Stomach (tissue), 19 donors: ENCODE measurements at regions of chr13 and their contacts with region 1.

Region 1: DNA sequence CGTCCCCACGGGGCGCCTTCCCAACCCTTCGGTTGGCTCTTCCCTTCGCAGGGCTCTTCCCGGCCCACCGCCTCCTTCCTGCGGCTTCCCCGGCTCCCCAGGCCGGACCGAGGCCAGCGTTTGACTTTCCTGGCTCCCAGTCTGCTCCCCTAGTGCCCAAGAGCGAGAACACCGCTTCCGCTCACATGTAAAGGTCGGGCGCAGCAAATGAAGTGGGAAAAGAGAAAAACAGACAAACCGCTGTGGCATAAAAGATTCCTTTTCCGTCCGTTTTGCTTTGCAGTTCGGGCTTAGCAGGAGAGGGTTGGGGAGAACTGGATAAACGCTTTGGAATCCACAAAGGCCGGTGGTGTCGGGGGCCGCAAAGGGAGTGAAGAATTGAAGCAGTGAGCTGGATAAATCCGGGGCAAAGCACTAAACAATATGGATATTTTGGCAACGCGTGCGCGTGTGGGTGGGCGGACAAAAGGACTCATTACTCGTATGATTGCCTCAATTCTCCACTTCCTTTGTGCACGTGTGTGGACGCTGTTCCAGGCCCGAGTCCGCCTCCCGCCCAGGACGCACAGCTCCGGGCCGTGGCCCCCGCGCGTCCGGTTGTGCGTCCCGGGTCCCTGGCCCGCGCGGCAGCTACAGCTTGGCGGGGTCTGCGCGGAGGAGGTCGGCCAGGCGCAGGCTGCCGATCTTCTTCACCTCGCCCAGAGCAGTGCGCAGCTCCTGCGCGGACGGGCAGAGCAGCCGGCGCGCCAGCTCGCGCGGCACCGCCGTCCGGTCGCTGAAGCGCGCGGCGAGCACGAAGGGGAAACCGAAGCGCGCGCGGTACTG is 8.6 kb upstream of the CDX2 start:
- DNase-seq: no peak
- H3K4me3 ChIP-seq: peak overlapping the region in 3 of 4 donors; percentile 13 to 24 (median 19)
- H3K27ac ChIP-seq: no peak overlapping the region
- H3K4me1 ChIP-seq: peaks cover 19 to 57% (median 43%) of the 10 kb centered on the region in 4 donors
- H3K27me3 ChIP-seq: peaks cover 47 to 100% (median 96%) of the 10 kb centered on the region in 3 donors
- CTCF ChIP-seq: no peak
- EP300 ChIP-seq: no peak
- POLR2A ChIP-seq: no peak

Region 2: GRCh38 chr13:26946684-26947343 is 1030.9 kb before region 1 on chr13:
- intact Hi-C with region 1: loop called (anchors 10 kb)
- DNase-seq: peak in 1 of 2 donors; percentile 83
- H3K4me3 ChIP-seq: no peak overlapping the region
- H3K27ac ChIP-seq: no peak overlapping the region
- H3K4me1 ChIP-seq: peaks cover 3 to 25% (median 19%) of the 10 kb centered on the region in 4 donors
- H3K27me3 ChIP-seq: no peaks in the 10 kb centered on the region
- CTCF ChIP-seq: peak in 5 of 7 experiments; percentile 60 to 95 (median 69)
- EP300 ChIP-seq: no peak
- POLR2A ChIP-seq: no peak

Region 3: DNA sequence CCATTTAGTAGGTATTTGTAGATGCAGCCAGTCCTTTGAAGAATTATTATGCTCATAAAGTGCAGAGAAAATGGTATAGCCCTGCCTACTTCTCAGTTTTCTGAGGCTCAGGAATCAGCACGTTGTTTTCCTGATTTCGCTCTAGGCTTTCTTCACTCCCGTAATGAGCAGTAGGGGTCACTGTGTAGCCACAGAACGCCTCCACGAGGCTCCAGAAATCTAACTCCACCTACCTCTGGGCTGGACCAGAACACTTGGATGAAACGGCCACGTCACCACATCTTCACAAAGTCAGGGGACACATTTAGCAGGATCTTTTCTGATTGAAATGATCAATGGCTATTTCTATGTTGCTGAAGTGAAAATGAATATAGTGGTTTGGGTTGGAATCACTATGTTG is 603.0 kb before region 1 on chr13:
- intact Hi-C with region 1: loop called (anchors 10 kb)
- DNase-seq: peak; percentile 73 to 93
- H3K4me3 ChIP-seq: no peak overlapping the region
- H3K27ac ChIP-seq: peak overlapping the region in 1 of 5 donors; percentile 2
- H3K4me1 ChIP-seq: peaks cover 5 to 38% (median 21%) of the 10 kb centered on the region in 4 donors
- H3K27me3 ChIP-seq: peaks cover 0 to 9% (median 0%) of the 10 kb centered on the region in 3 donors
- CTCF ChIP-seq: peak in 5 of 7 experiments; percentile 45 to 83 (median 57)
- EP300 ChIP-seq: no peak
- POLR2A ChIP-seq: no peak

Region 4: GRCh38 chr13:27523346-27524073 is 454.2 kb before region 1 on chr13:
- intact Hi-C with region 1: loop called (anchors 10 kb)
- DNase-seq: peak in 1 of 2 donors; percentile 14
- H3K4me3 ChIP-seq: no peak overlapping the region
- H3K27ac ChIP-seq: no peak overlapping the region
- H3K4me1 ChIP-seq: no peaks in the 10 kb centered on the region
- H3K27me3 ChIP-seq: peaks cover 0 to 11% (median 0%) of the 10 kb centered on the region in 3 donors
- CTCF ChIP-seq: no peak
- EP300 ChIP-seq: no peak
- POLR2A ChIP-seq: no peak

Region 5: DNA sequence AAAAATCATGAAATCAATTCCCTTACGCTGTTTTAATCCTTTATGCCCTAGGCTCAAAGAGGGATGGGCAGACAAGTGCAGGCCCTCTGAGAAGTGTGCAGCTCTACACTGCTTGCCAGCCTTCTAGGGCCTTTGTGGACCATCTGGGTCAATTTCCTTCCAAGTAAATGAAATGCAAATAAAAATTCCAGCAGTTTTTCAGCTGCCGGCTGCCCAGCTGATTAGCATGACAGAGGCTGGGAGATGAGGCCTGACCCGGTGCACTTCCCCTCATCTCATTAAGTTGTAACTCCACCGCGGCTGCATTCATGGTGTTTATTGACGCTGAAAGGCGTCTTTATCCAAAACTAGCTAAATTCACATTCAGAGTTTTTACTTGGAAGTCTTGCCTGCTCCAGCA is 232.9 kb before region 1 on chr13:
- intact Hi-C with region 1: no loop called
- DNase-seq: no peak
- H3K4me3 ChIP-seq: no peak overlapping the region
- H3K27ac ChIP-seq: no peak overlapping the region
- H3K4me1 ChIP-seq: no peaks in the 10 kb centered on the region
- H3K27me3 ChIP-seq: peaks cover 0 to 8% (median 0%) of the 10 kb centered on the region in 3 donors
- CTCF ChIP-seq: no peak
- EP300 ChIP-seq: no peak
- POLR2A ChIP-seq: no peak

Region 6: DNA sequence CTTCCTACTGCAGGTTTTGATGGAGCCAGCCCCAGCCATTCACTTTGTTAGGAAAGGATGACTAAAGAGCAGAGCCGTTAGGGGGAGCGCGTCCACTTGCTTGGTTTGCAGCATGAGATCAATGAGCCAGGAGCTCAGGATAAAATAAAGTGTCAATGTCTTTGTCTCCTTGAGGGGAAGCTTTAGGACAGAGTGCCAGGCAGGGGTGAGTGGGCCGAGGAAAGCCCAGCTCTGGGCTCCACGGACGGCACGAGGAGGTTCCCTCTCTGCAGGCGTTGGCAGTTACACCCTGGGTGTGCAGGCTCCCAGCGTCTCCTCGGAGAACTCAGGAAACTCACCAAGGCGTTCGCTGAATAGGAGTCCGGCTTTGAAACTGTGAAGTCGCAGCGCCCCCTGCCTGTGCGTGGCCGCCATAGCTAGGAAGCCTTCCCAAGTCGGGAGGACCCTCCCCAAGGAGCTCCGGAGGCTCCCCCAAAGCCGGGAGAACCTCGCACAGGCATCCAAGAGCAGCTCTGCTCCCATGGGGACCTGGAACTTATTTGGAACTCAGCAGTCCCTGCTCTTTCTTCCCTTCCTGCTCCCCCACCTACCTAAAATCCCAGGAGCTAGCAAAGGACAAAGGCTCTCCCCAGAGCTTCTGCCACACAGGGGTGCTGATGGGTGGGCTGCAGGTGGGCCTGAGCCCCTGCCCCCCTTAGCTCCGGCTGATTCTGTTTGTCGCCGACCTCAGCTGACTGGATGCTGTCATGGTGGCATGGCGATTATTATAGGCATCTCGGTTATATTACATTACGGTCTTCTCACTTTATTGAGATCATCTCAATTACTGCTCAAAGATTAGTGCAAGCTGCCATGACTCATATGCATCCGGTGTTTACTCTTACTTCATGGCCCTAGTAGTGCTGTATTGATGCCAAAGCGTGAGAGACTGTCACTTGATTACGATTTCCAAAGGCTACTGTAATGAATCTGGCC is 151.0 kb before region 1 on chr13:
- intact Hi-C with region 1: loop called (anchors 10 kb)
- DNase-seq: peak; percentile 86 to 95
- H3K4me3 ChIP-seq: peak overlapping the region; percentile 19 to 36 (median 25)
- H3K27ac ChIP-seq: no peak overlapping the region
- H3K4me1 ChIP-seq: peaks cover 0 to 23% (median 16%) of the 10 kb centered on the region in 4 donors
- H3K27me3 ChIP-seq: peaks cover 16 to 85% (median 46%) of the 10 kb centered on the region in 3 donors
- CTCF ChIP-seq: peak in 5 of 7 experiments; percentile 84 to 96 (median 92)
- EP300 ChIP-seq: no peak
- POLR2A ChIP-seq: no peak